Ovary (tissue), 10 donors: ENCODE measurements at regions of chr5 and their contacts with region 1.

Region 1: DNA sequence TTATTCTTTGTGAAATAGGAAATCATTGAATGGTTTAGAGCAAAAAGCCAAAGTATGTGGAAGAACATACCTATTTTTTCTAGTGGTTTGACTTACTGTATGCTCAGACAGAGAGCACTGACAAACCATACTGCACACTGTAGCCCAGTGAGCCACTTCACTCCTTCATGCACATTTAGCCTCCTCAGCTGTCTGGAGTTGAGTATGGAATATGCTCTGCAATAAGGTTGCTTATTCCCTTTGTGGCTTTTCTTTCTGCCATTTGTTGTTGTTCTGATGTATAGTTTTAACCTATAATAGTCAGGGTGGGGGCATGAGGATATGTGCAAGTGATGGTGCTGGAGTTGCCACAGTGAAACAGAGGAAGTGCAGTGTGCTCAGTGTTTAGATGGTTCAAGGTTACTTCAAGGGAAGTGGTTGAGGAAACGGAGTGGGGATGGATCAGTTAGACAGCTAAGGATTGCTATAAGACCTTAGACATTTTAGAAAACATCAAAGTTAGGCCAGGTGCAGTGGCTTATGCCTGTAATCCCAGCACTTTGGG is 100.7 kb downstream of the CDC42SE2 start:
- DNase-seq: no peak
- H3K4me3 ChIP-seq: no peak overlapping the region
- H3K27ac ChIP-seq: no peak overlapping the region
- H3K4me1 ChIP-seq: no peaks in the 10 kb centered on the region
- H3K27me3 ChIP-seq: no peaks in the 10 kb centered on the region
- CTCF ChIP-seq: no peak
- EP300 ChIP-seq: no peak
- POLR2A ChIP-seq: no peak

Region 2: GRCh38 chr5:130678637-130679036 is 685.9 kb before region 1 on chr5:
- intact Hi-C with region 1: loop called in 1 of 4 experiments (anchors 5 kb)
- DNase-seq: no peak
- H3K4me3 ChIP-seq: no peak overlapping the region
- H3K27ac ChIP-seq: no peak overlapping the region
- H3K4me1 ChIP-seq: no peaks in the 10 kb centered on the region
- H3K27me3 ChIP-seq: no peaks in the 10 kb centered on the region
- CTCF ChIP-seq: no peak
- EP300 ChIP-seq: no peak
- POLR2A ChIP-seq: no peak